GM12878 (cell line): ENCODE measurements at regions of chr7 and their contacts with region 1.

Region 1: DNA sequence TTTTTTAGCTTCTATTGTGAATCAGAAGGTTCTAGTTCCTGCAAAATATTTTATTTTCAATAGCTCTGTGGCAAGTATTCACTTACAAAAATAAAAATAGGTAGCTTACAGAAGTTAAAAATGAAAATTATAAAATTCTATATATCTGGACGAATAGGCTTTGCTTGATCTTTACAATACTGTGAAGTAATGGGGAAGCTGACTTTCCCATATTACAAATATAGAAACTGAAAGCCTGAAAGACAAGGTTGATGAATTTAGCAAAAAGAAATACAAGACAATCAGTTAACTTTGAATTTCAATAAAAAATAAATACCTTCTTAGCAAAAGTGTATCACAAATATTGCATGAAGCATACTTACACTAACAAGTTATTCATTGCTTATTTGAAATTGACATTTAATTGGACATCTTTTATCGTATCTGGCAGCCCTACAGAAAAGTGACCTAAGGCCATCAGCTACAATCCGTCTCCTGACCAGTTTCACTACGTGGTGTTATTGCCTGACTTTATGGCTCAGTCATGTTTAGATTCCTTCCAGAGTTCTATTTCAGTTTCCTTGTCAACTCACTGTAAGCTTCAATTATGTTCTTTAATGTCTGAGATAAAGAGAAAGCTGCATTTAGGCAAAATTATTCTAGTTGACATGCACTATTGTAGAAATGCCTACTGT is 310.5 kb upstream of the HGF start:
- DNase-seq: peak; percentile 13
- ATAC-seq: peak; percentile 88
- H3K4me3 ChIP-seq: no peak overlapping the region
- H3K27ac ChIP-seq: no peak overlapping the region
- H3K4me1 ChIP-seq: no peaks in the 10 kb centered on the region
- H3K27me3 ChIP-seq: no peaks in the 10 kb centered on the region
- CTCF ChIP-seq: no peak
- EP300 ChIP-seq: 0 out of 4 replicates have a peak, but pooled peaks of 1 of the 2 experiments have one; percentile 30
- POLR2A ChIP-seq: no peak
- RAD21 ChIP-seq: no peak

Region 2: DNA sequence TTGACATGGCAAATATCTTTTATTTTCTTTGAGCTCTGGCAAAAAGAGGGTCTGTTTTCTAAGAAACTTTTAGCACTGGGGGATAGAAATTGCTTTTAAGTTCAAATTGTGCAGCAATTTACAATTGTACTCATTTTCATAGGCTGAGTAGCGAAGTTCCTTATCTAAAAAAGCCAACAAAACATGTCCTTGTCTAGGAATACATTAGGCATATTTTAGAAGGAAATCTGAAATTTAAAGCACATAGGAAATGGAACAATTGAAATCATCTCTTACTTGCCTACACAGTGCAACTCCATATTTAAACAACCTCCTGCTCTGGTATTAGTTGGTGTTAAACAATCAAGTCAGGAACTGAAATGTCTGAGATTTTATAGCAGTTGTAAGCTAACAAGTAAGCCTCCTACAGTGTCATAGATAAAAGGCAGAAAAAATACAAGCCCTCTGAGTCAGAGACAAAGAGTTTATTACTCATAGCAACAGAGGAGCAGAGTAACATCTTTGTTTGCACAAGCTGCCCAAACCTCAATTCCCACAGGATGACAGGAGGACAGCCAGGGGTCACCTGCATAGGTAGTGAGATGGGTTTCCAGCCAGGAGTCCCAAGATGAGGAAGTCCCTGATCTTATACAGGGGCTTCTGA is 30.4 kb before region 1 on chr7:
- CTCF ChIA-PET with region 1: interaction called, 13 read pairs
- POLR2A ChIA-PET with region 1: interaction called, 5 read pairs
- RAD21 ChIA-PET with region 1: interaction called, 30 read pairs
- SMC1A ChIA-PET with region 1: interaction called, 39 read pairs
- in situ Hi-C with region 1: no loop called
- intact Hi-C with region 1: loop called (anchors 1 kb)
- DNase-seq: no peak
- ATAC-seq: peak; percentile 70
- H3K4me3 ChIP-seq: no peak overlapping the region
- H3K27ac ChIP-seq: no peak overlapping the region
- H3K4me1 ChIP-seq: no peaks in the 10 kb centered on the region
- H3K27me3 ChIP-seq: no peaks in the 10 kb centered on the region
- CTCF ChIP-seq: no peak
- EP300 ChIP-seq: peak in 1 of 2 experiments; percentile 8; a peak in 1 of 4 replicates
- POLR2A ChIP-seq: no peak
- RAD21 ChIP-seq: no peak

Region 3: DNA sequence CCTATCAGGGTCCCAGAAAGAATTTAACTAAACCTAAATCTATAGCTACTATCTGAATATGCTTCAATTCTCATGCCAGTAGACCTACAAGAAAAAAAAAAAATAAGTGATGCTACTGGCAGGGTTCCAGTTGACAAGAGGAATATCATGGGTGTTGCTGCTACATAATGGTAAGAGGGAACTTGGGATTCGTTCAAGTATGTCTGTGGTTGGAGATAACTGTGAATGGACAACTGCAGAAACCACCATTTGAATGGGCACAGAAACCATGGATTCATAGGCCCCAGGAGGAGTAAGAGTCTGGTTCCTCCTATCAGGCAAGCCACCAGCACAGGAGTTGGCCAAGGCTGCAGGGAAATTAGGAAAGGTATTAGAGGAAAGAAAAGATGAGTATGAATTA is 22.9 kb before region 1 on chr7:
- CTCF ChIA-PET with region 1: interaction called, 10 read pairs
- POLR2A ChIA-PET with region 1: interaction called, 3 read pairs
- RAD21 ChIA-PET with region 1: interaction called, 6 read pairs
- SMC1A ChIA-PET with region 1: interaction called, 24 read pairs
- in situ Hi-C with region 1: no loop called
- intact Hi-C with region 1: no loop called
- DNase-seq: no peak
- ATAC-seq: no peak
- H3K4me3 ChIP-seq: no peak overlapping the region
- H3K27ac ChIP-seq: no peak overlapping the region
- H3K4me1 ChIP-seq: no peaks in the 10 kb centered on the region
- H3K27me3 ChIP-seq: no peaks in the 10 kb centered on the region
- CTCF ChIP-seq: no peak
- EP300 ChIP-seq: no peak
- POLR2A ChIP-seq: no peak
- RAD21 ChIP-seq: no peak

Region 4: GRCh38 chr7:82091126-82091684 is 10.8 kb after region 1 on chr7:
- CTCF ChIA-PET with region 1: interaction called, 4 read pairs
- POLR2A ChIA-PET with region 1: no interaction called
- RAD21 ChIA-PET with region 1: interaction called, 8 read pairs
- SMC1A ChIA-PET with region 1: interaction called, 26 read pairs
- in situ Hi-C with region 1: no loop called
- intact Hi-C with region 1: no loop called
- DNase-seq: no peak
- ATAC-seq: no peak
- H3K4me3 ChIP-seq: no peak overlapping the region
- H3K27ac ChIP-seq: no peak overlapping the region
- H3K4me1 ChIP-seq: no peaks in the 10 kb centered on the region
- H3K27me3 ChIP-seq: no peaks in the 10 kb centered on the region
- CTCF ChIP-seq: no peak
- EP300 ChIP-seq: no peak
- POLR2A ChIP-seq: no peak
- RAD21 ChIP-seq: no peak

Region 5: DNA sequence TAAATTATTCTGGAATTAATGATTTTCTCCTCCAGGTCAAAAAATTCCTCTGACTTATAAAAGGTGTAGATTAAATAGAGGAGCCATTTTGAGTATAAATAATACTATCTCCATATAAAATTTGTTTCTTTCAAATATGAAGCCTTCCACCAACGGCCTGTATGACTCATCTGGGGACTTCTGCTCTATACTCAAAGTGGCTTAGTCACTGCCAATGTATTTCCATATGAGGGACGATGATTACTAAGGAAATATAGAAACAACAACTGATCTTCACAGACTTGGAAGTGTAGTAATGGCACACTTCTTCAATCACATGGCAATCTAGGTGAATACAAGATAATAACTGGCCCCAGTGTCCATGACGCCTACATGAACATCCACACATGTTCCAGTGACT is 25.1 kb after region 1 on chr7:
- CTCF ChIA-PET with region 1: interaction called, 6 read pairs
- POLR2A ChIA-PET with region 1: interaction called, 5 read pairs
- RAD21 ChIA-PET with region 1: interaction called, 46 read pairs
- SMC1A ChIA-PET with region 1: interaction called, 14 read pairs
- in situ Hi-C with region 1: no loop called
- intact Hi-C with region 1: no loop called
- DNase-seq: no peak
- ATAC-seq: peak; percentile 66
- H3K4me3 ChIP-seq: no peak overlapping the region
- H3K27ac ChIP-seq: no peak overlapping the region
- H3K4me1 ChIP-seq: no peaks in the 10 kb centered on the region
- H3K27me3 ChIP-seq: no peaks in the 10 kb centered on the region
- CTCF ChIP-seq: no peak
- EP300 ChIP-seq: no peak
- POLR2A ChIP-seq: no peak
- RAD21 ChIP-seq: no peak

Region 6: GRCh38 chr7:82210416-82211184 is 130.2 kb after region 1 on chr7:
- CTCF ChIA-PET with region 1: no interaction called
- POLR2A ChIA-PET with region 1: interaction called, 3 read pairs
- RAD21 ChIA-PET with region 1: interaction called, 11 read pairs
- SMC1A ChIA-PET with region 1: no interaction called
- in situ Hi-C with region 1: no loop called
- intact Hi-C with region 1: no loop called
- DNase-seq: no peak
- ATAC-seq: peak; percentile 62
- H3K4me3 ChIP-seq: no peak overlapping the region
- H3K27ac ChIP-seq: no peak overlapping the region
- H3K4me1 ChIP-seq: no peaks in the 10 kb centered on the region
- H3K27me3 ChIP-seq: no peaks in the 10 kb centered on the region
- CTCF ChIP-seq: no peak
- EP300 ChIP-seq: no peak
- POLR2A ChIP-seq: no peak
- RAD21 ChIP-seq: no peak

Region 7: GRCh38 chr7:82229164-82229563 is 148.8 kb after region 1 on chr7:
- CTCF ChIA-PET with region 1: interaction called, 3 read pairs
- POLR2A ChIA-PET with region 1: no interaction called
- RAD21 ChIA-PET with region 1: interaction called, 3 read pairs
- SMC1A ChIA-PET with region 1: interaction called, 13 read pairs
- in situ Hi-C with region 1: no loop called
- intact Hi-C with region 1: no loop called
- DNase-seq: no peak
- ATAC-seq: no peak
- H3K4me3 ChIP-seq: no peak overlapping the region
- H3K27ac ChIP-seq: no peak overlapping the region
- H3K4me1 ChIP-seq: no peaks in the 10 kb centered on the region
- H3K27me3 ChIP-seq: no peaks in the 10 kb centered on the region
- CTCF ChIP-seq: no peak
- EP300 ChIP-seq: no peak
- POLR2A ChIP-seq: no peak
- RAD21 ChIP-seq: no peak

Region 8: GRCh38 chr7:82631998-82632397 is 551.6 kb after region 1 on chr7:
- CTCF ChIA-PET with region 1: no interaction called
- POLR2A ChIA-PET with region 1: no interaction called
- RAD21 ChIA-PET with region 1: no interaction called
- SMC1A ChIA-PET with region 1: no interaction called
- in situ Hi-C with region 1: no loop called
- intact Hi-C with region 1: no loop called
- DNase-seq: no peak
- ATAC-seq: no peak
- H3K4me3 ChIP-seq: no peak overlapping the region
- H3K27ac ChIP-seq: no peak overlapping the region
- H3K4me1 ChIP-seq: no peaks in the 10 kb centered on the region
- H3K27me3 ChIP-seq: no peaks in the 10 kb centered on the region
- CTCF ChIP-seq: no peak
- EP300 ChIP-seq: no peak
- POLR2A ChIP-seq: no peak
- RAD21 ChIP-seq: no peak